ENCODE measurements at regions of chr14 and their contacts with region 1.

Region 1: GRCh38 chr14:91286530-91286937 is 42.0 kb upstream of the GPR68 start:
- DNase-seq: peak; percentile 94
- H3K4me3 Mint-ChIP-seq: no peak overlapping the region
- H3K27ac Mint-ChIP-seq: peak overlapping the region; percentile 77
- H3K4me1 Mint-ChIP-seq: peaks cover 14% of the 10 kb centered on the region
- H3K27me3 Mint-ChIP-seq: no peaks in the 10 kb centered on the region

Region 2: DNA sequence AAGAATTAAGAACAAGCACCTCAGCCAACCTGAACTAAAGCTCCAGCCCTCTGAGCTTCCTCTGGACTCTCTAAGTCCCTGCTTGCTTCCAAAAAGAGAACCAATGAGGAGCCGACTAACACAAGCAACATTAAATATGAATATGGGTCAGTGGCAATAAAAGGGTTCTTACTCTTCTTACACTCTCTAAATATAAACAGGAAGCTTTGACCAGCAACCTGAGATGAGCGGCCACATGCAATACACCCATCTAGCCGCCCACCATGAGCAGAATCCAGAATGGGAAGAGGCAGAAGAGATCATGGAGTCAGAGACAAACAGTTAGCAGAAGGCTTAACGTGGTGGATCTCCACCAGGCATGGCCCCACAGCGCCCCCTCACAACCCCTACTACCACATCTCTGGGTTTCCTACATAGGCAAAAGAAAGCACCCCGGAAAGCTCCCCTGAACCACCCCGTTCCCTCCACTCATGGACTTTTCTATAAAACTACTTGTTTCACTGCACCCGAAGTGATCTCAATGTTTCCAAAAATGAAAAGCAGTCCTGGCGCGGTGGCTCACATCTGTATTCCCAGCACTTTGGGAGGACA is 529.7 kb before region 1 on chr14:
- intact Hi-C with region 1: no loop called
- DNase-seq: no peak
- H3K4me3 Mint-ChIP-seq: peak overlapping the region; percentile 71
- H3K27ac Mint-ChIP-seq: no peak overlapping the region
- H3K4me1 Mint-ChIP-seq: peaks cover 14% of the 10 kb centered on the region
- H3K27me3 Mint-ChIP-seq: peaks cover 26% of the 10 kb centered on the region

Region 3: GRCh38 chr14:90903101-90903500 is 383.4 kb before region 1 on chr14:
- intact Hi-C with region 1: loop called (anchors 10 kb)
- DNase-seq: peak; percentile 89
- H3K4me3 Mint-ChIP-seq: no peak overlapping the region
- H3K27ac Mint-ChIP-seq: no peak overlapping the region
- H3K4me1 Mint-ChIP-seq: peaks cover 30% of the 10 kb centered on the region
- H3K27me3 Mint-ChIP-seq: no peaks in the 10 kb centered on the region

Region 4: GRCh38 chr14:91185721-91186120 is 100.8 kb before region 1 on chr14:
- intact Hi-C with region 1: no loop called
- DNase-seq: no peak
- H3K4me3 Mint-ChIP-seq: no peak overlapping the region
- H3K27ac Mint-ChIP-seq: no peak overlapping the region
- H3K4me1 Mint-ChIP-seq: no peaks in the 10 kb centered on the region
- H3K27me3 Mint-ChIP-seq: no peaks in the 10 kb centered on the region